Spleen (tissue), 13 donors: ENCODE measurements at regions of chr7 and their contacts with region 1.

Region 1: GRCh38 chr7:7438851-7439250 is 96.8 kb downstream of the COL28A1 start:
- DNase-seq: no peak
- H3K4me3 ChIP-seq: no peak overlapping the region
- H3K27ac ChIP-seq: no peak overlapping the region
- H3K4me1 ChIP-seq: no peaks in the 10 kb centered on the region
- H3K27me3 ChIP-seq: no peaks in the 10 kb centered on the region
- CTCF ChIP-seq: no peak
- POLR2A ChIP-seq: no peak

Region 2: DNA sequence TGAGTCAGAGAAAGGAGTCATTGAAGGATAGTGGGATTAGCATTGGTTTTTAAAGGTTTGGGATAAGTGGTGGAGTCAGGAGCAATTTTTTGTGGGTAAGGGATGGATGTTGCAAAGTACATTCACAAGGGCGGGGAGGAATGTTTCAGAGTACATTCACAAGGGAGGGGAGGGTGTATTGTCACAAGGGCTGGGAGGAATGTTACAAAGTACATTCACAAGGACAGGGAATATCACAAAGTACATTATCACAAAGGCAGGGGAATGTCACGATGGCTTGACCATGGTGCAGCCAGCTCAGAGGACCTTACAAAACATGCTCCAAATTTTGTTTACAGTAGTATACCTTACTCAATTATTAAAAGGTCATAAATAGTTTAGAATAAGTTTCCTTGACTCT is 226.2 kb before region 1 on chr7:
- intact Hi-C with region 1: no loop called
- DNase-seq: no peak
- H3K4me3 ChIP-seq: no peak overlapping the region
- H3K27ac ChIP-seq: no peak overlapping the region
- H3K4me1 ChIP-seq: peaks cover 0 to 18% (median 0%) of the 10 kb centered on the region in 6 donors
- H3K27me3 ChIP-seq: no peaks in the 10 kb centered on the region
- CTCF ChIP-seq: no peak
- POLR2A ChIP-seq: no peak

Region 3: GRCh38 chr7:7521259-7521658 is 82.4 kb after region 1 on chr7:
- intact Hi-C with region 1: loop called (anchors 10 kb)
- DNase-seq: no peak
- H3K4me3 ChIP-seq: no peak overlapping the region
- H3K27ac ChIP-seq: no peak overlapping the region
- H3K4me1 ChIP-seq: no peaks in the 10 kb centered on the region
- H3K27me3 ChIP-seq: peaks cover 0 to 4% (median 0%) of the 10 kb centered on the region in 7 donors
- CTCF ChIP-seq: no peak
- POLR2A ChIP-seq: no peak